GM13976 (cell line): ENCODE measurements at regions of chr3 and their contacts with region 1.

Region 1: DNA sequence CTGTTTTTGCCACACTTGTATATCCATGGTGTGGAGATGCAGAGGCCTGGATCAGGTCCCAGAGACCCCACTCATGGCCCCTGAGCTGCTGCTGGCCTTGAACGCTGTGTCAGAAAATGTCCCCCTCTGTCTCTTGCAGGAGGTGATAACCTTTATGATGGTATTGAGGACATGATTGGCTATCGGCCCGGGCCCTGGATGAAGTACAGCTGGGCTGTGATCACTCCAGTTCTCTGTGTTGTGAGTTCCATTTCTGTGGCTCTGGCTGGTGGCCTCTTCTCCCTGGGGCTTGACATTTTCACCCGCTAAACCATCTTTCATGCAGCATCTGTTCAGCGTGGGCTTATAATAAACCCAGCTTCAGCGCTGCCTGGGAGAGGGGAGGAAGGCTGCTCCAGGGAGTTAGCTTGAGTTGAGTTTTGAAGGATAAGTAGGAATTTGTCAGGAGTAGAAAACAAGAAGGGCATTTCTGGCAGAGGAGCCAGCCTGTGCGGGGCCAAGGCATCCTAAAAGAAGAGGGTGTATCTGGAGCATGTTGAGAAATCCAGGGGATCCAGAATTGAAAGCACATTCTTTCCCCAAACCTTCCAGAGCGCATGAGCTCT is 61.1 kb downstream of the GRIP2 start:
- DNase-seq: no peak
- CTCF ChIP-seq: no peak

Region 2: DNA sequence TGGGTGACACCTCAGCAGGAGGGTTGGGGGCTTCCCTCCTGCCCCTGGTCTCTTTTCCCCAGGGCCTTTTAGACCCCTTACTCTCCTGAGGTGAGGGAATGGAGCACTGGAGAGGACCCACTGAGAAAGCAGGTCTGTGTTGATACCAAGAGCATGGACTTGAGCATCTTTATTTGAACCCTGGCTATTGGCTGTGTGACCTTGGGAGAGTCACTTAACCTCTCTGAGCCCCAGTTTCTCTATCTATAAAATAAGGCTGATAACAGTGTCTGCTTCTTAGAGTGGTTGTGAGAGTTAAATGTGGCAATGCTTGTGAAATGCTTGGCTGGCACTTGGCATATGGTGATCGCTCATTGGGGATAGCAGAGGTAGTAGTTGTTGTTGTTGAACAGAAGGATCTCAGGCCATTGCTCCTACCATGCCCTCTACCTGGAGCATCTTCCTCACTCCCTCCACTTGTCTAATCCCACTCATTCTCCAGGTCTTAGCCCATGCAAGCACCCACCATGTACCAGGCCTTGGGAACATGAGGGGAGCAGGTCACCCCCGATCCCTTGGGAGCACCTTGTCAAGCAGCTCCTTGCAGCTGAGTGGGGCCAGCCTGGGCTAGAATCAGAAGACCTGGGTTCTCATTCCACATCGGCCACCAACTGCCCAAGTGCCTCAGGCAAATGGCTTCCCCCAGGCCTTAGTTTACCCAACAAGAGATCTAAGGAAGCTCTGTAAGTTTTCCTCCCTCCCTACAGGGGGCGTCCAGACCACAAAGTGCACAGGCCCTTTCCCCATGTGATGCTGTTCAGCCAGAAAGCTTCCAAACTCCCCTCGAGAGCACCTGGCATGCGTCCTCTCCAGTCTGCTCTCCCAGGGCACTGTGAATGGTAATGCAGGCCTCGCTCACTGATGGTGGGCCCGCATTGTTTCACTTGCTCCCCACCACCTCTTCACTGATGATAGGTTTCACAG is 203.8 kb before region 1 on chr3:
- in situ Hi-C with region 1: loop called (anchors 5 kb)
- DNase-seq: peak; percentile 55
- CTCF ChIP-seq: peak; percentile 8